ENCODE measurements at regions of chr11 and their contacts with region 1.

Region 1: GRCh38 chr11:123083623-123084029 is 21.7 kb upstream of the HSPA8 start:
- DNase-seq: peak; percentile 71
- ATAC-seq: peak; percentile 37
- H3K4me3 Mint-ChIP-seq: no peak overlapping the region
- H3K27ac Mint-ChIP-seq: peak overlapping the region; percentile 74
- H3K4me1 Mint-ChIP-seq: peaks cover 35% of the 10 kb centered on the region
- H3K27me3 Mint-ChIP-seq: no peaks in the 10 kb centered on the region
- CTCF ChIP-seq: no peak

Region 2: GRCh38 chr11:123062158-123062891 is 21.3 kb before region 1 on chr11:
- CTCF ChIA-PET with region 1: no interaction called
- POLR2A ChIA-PET with region 1: interaction called, 67 read pairs
- intact Hi-C with region 1: no loop called
- DNase-seq: peak; percentile 100
- ATAC-seq: peak; percentile 86
- H3K4me3 Mint-ChIP-seq: peak overlapping the region; percentile 97
- H3K27ac Mint-ChIP-seq: peak overlapping the region; percentile 99
- H3K4me1 Mint-ChIP-seq: peaks cover 32% of the 10 kb centered on the region
- H3K27me3 Mint-ChIP-seq: no peaks in the 10 kb centered on the region
- CTCF ChIP-seq: no peak

Measured in activated CD8-positive, alpha-beta T cell treated with anti-CD3 and anti-CD28 coated beads for 36 hours (primary cell).